ENCODE measurements at regions of chr9 and their contacts with region 1.

Region 1: DNA sequence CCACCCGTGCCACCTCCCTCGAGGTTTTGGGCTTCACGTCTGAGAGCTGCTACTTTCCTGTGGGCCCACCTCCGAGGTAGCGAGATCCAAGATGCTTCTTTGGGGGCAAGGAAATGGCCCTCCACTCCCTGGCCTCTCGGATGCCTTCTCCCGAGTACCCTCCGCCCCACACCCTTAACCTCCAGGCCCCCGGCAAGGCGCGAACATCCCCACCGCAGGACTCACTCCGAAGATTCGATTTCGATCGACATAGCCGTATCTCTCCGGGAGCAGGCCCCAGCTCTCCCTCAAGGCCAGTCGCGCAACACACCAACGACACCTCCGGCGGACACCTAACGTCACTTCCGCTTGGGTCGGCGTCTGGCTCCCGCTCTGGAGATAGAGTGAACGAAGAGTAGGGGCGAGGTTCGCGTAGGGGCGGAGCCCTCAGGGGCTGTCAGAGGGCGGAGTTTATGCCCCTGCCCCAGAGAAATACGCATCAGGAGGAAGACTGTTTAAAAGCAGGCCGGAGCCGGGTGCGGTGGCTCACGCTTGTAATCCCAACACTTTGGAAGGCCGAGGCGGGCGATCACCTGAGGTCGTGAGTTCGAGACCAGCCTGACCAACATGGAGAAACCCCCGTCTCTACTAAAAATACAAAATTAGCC is at the start of gene SMU1:
- DNase-seq: peak; percentile 89 to 98 (median 94)
- ATAC-seq: peak; percentile 94
- H3K4me3 ChIP-seq: peak within 1 kb of the TSS; percentile 69 to 70
- H3K4me3 Mint-ChIP-seq: peak within 1 kb of the TSS; percentile 97
- H3K27ac ChIP-seq: peak within 1 kb of the TSS; percentile 91
- H3K27ac Mint-ChIP-seq: peak within 1 kb of the TSS; percentile 99
- H3K4me1 ChIP-seq: peaks cover 28% of the 10 kb centered on the region
- H3K4me1 Mint-ChIP-seq: peaks cover 34% of the 10 kb centered on the region
- H3K27me3 ChIP-seq: no peaks in the 10 kb centered on the region
- H3K27me3 Mint-ChIP-seq: no peaks in the 10 kb centered on the region
- CTCF ChIP-seq: no peak
- total RNA-seq, gene SMU1: 29.2 to 30.0 TPM

Region 2: DNA sequence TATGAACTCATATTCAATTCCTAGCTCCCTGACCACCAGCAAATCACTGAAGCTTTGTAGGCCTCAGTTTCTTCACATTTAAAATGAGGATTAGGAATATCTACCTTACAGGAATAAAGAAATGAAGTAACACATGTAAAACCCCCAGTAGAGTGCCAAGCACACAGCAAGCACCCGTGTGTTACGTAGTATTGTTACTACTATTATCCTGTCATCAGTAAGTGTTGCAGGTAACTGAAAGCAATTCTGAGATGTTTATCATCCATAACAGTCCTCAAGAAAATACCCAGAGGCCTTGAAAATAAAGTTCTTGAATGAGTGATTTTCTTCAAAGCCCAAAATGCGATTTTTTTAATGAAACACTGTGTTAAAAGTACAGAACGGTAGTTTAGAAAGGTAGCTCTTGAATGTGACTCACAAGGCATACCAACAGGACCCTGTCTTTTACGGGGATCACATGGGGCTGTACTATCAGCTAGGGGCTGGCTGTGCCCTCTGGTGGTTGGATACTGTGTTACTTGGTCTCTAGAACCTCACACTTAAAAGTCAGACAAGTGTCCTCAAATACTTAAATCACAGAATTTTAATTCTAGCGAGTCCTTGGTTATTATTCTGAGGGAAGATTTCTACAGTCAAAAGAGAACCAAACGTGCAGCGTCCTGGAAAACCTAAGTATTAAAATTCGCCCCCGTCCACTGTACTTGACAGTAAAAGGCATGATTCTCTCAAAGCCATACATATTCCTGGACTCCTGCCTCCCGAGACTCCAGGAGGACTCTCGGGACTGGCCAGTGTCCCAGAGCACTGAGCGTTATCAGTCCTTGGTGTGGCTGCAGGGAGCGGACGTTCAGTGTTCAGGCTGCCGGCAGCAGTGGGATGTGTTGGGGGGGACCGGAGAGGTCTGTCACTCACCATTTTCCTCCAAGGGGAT is 504.2 kb before region 1 on chr9:
- CTCF ChIA-PET with region 1: no interaction called
- POLR2A ChIA-PET with region 1: no interaction called
- intact Hi-C with region 1: loop called in 1 of 2 experiments (anchors 5 kb)
- DNase-seq: peak; percentile 49 to 91 (median 76)
- ATAC-seq: peak; percentile 80
- H3K4me3 ChIP-seq: peak overlapping the region; percentile 83 to 89
- H3K4me3 Mint-ChIP-seq: peak overlapping the region; percentile 99
- H3K27ac ChIP-seq: peak overlapping the region; percentile 83 to 85
- H3K27ac Mint-ChIP-seq: peak overlapping the region; percentile 97
- H3K4me1 ChIP-seq: peaks cover 13% of the 10 kb centered on the region
- H3K4me1 Mint-ChIP-seq: peaks cover 33% of the 10 kb centered on the region
- H3K27me3 ChIP-seq: no peaks in the 10 kb centered on the region
- H3K27me3 Mint-ChIP-seq: no peaks in the 10 kb centered on the region
- CTCF ChIP-seq: peak; percentile 71

Region 3: GRCh38 chr9:33024966-33025571 is 51.4 kb before region 1 on chr9 and contains the start of gene DNAJA1:
- CTCF ChIA-PET with region 1: interaction called, 3 read pairs
- POLR2A ChIA-PET with region 1: no interaction called
- intact Hi-C with region 1: loop called (anchors 1 to 2 kb)
- DNase-seq: peak; percentile 92 to 98 (median 96)
- ATAC-seq: peak; percentile 80
- H3K4me3 ChIP-seq: peak within 1 kb of the TSS; percentile 100
- H3K4me3 Mint-ChIP-seq: peak within 1 kb of the TSS; percentile 96
- H3K27ac ChIP-seq: peak within 1 kb of the TSS; percentile 100
- H3K27ac Mint-ChIP-seq: peak within 1 kb of the TSS; percentile 96
- H3K4me1 ChIP-seq: peaks cover 63% of the 10 kb centered on the region
- H3K4me1 Mint-ChIP-seq: peaks cover 70% of the 10 kb centered on the region
- H3K27me3 ChIP-seq: no peaks in the 10 kb centered on the region
- H3K27me3 Mint-ChIP-seq: no peaks in the 10 kb centered on the region
- CTCF ChIP-seq: no peak
- total RNA-seq, gene DNAJA1: 170 to 172 TPM

Region 4: GRCh38 chr9:33092634-33093033 is 16.2 kb after region 1 on chr9:
- CTCF ChIA-PET with region 1: no interaction called
- POLR2A ChIA-PET with region 1: no interaction called
- intact Hi-C with region 1: no loop called
- DNase-seq: no peak
- ATAC-seq: no peak
- H3K4me3 ChIP-seq: no peak overlapping the region
- H3K4me3 Mint-ChIP-seq: no peak overlapping the region
- H3K27ac ChIP-seq: no peak overlapping the region
- H3K27ac Mint-ChIP-seq: no peak overlapping the region
- H3K4me1 ChIP-seq: no peaks in the 10 kb centered on the region
- H3K4me1 Mint-ChIP-seq: peaks cover 9% of the 10 kb centered on the region
- H3K27me3 ChIP-seq: no peaks in the 10 kb centered on the region
- H3K27me3 Mint-ChIP-seq: no peaks in the 10 kb centered on the region
- CTCF ChIP-seq: no peak

Region 5: DNA sequence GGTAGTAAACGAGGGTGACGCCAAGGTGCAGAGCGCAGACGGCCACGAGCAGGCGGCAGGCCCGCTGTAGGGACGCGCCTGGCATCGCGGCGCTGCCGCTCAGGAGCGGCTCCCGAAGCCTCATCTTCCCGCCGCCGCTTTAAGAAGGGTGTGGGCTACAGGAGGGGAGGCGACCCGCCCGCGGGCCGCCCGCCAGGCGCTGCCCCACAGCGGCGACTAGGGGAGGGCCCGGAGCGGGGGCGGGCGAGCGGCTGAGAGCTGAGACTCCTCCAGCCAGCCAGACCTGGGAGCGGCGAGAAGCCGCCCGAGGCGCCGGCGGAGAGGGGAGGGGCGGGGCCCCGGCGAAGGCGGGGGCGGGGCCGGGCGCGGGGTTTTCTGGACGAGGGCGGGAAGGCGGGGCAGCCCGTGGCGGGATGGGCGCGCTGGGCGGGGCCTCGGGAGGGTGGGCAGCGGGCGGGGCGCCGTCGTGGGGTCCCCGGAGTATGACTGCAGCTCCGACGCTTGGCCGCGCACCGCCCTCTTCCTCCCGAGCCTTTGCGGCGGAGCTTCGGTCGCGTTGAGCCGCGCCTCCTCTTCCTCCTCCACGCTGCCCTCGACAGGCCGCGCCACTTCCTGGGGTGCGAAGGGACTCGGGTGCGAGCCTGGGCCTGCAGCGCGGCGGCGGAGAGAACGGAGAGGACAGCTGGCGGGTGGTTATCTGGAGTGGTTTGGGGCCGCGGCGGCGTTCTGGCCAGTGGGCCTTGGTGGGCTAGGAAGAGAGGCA is 90.7 kb after region 1 on chr9 and contains the start of gene B4GALT1:
- CTCF ChIA-PET with region 1: interaction called, 18 read pairs
- POLR2A ChIA-PET with region 1: interaction called, 16 read pairs
- intact Hi-C with region 1: loop called (anchors 1 kb)
- DNase-seq: peak; percentile 94 to 99 (median 97)
- ATAC-seq: peak; percentile 82
- H3K4me3 ChIP-seq: peak within 1 kb of the TSS; percentile 86 to 96
- H3K4me3 Mint-ChIP-seq: peak within 1 kb of the TSS; percentile 93
- H3K27ac ChIP-seq: peak within 1 kb of the TSS; percentile 79 to 94
- H3K27ac Mint-ChIP-seq: peak within 1 kb of the TSS; percentile 99
- H3K4me1 ChIP-seq: peaks cover 54% of the 10 kb centered on the region
- H3K4me1 Mint-ChIP-seq: peaks cover 62% of the 10 kb centered on the region
- H3K27me3 ChIP-seq: no peaks in the 10 kb centered on the region
- H3K27me3 Mint-ChIP-seq: no peaks in the 10 kb centered on the region
- CTCF ChIP-seq: no peak
- total RNA-seq, gene B4GALT1: 139 to 140 TPM

Region 6: DNA sequence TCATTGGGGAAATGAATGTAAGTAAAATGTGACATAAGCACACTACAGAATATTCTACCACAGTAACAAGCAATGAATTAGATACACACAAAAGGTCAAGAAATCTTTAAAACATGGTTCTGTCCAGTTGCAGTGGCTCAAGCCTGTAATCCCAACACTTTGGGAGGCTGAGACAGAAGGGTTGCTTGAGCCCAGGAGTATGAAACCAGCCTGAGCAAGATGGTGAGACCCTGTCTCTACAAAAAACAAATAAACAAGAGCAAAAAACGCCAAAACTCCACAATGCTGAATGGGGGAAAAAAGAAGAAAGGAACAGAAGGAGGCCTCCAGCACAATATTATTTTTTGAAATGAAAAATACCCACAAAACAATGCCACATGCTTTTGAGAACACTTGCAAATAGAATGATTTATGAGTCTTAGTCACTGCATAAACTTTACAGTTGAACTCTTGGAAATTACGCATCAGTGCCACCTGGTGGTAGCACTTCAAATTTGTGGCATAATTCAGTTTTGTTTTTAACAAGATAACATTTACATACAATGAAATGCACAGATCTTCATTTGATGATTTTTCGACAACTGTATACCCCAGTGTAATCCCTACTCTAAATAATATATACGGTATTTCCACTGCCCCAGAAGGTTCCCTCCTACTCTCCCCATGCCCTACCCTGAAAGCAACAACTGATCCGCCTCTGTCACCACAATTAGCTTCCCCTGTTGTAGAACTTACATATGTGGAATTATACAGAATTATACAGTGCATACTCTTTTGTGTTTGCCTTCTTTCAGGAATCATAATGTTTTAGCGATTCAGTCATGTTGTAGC is 149.1 kb after region 1 on chr9:
- CTCF ChIA-PET with region 1: interaction called, 48 read pairs
- POLR2A ChIA-PET with region 1: interaction called, 10 read pairs
- intact Hi-C with region 1: loop called (anchors 1 kb)
- DNase-seq: peak; percentile 44 to 82 (median 74)
- ATAC-seq: peak; percentile 86
- H3K4me3 ChIP-seq: no peak overlapping the region
- H3K4me3 Mint-ChIP-seq: no peak overlapping the region
- H3K27ac ChIP-seq: no peak overlapping the region
- H3K27ac Mint-ChIP-seq: no peak overlapping the region
- H3K4me1 ChIP-seq: no peaks in the 10 kb centered on the region
- H3K4me1 Mint-ChIP-seq: peaks cover 13% of the 10 kb centered on the region
- H3K27me3 ChIP-seq: no peaks in the 10 kb centered on the region
- H3K27me3 Mint-ChIP-seq: peaks cover 2% of the 10 kb centered on the region
- CTCF ChIP-seq: peak; percentile 78

Region 7: DNA sequence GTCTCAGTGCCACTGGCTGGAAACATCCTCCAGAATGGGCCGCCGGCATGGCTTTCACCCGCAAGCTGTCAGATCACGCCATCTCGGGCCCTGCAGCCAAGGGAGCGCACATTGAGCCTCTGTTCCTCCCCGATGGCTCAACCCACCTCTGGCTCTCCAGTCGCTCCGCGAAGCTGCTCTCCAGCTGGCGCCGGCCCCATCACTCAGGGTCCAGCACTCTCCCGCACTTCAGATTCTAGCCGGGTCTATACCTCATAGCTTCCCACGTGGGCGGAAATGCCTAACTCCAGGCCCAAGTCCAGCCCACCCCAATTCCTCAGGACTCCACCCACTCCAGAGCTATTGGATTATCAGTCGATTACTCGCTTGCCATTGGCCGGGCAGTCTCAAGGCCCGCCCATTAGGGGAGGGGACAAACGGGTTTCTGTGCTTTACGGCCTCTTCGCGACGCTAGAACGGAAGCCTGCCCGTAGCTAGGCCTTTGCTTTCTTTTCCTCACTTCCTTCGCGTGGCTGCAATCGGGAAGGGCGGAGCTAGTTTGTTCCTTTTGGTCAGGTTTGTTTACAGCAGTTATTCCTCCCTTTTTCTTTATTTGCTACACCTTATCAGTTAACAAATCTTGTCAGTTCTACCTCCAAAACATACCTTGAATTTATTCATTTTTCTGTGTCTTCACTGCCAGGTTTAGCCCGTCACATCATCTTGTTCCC is 397.3 kb after region 1 on chr9 and contains the start of gene NOL6:
- CTCF ChIA-PET with region 1: no interaction called
- POLR2A ChIA-PET with region 1: no interaction called
- intact Hi-C with region 1: loop called (anchors 5 to 10 kb)
- DNase-seq: peak; percentile 97 to 99 (median 98)
- ATAC-seq: peak; percentile 99
- H3K4me3 ChIP-seq: peak within 1 kb of the TSS; percentile 91 to 94
- H3K4me3 Mint-ChIP-seq: peak within 1 kb of the TSS; percentile 99
- H3K27ac ChIP-seq: peak within 1 kb of the TSS; percentile 76 to 80
- H3K27ac Mint-ChIP-seq: peak within 1 kb of the TSS; percentile 96
- H3K4me1 ChIP-seq: peaks cover 22% of the 10 kb centered on the region
- H3K4me1 Mint-ChIP-seq: peaks cover 32% of the 10 kb centered on the region
- H3K27me3 ChIP-seq: no peaks in the 10 kb centered on the region
- H3K27me3 Mint-ChIP-seq: no peaks in the 10 kb centered on the region
- CTCF ChIP-seq: no peak
- total RNA-seq, gene NOL6: 41.8 to 42.3 TPM

Region 8: GRCh38 chr9:33843312-33843961 is 767.0 kb after region 1 on chr9:
- CTCF ChIA-PET with region 1: no interaction called
- POLR2A ChIA-PET with region 1: no interaction called
- intact Hi-C with region 1: no loop called
- DNase-seq: no peak
- ATAC-seq: no peak
- H3K4me3 ChIP-seq: no peak overlapping the region
- H3K4me3 Mint-ChIP-seq: peak overlapping the region; percentile 11
- H3K27ac ChIP-seq: no peak overlapping the region
- H3K27ac Mint-ChIP-seq: peak overlapping the region; percentile 64
- H3K4me1 ChIP-seq: peaks cover 12% of the 10 kb centered on the region
- H3K4me1 Mint-ChIP-seq: peaks cover 60% of the 10 kb centered on the region
- H3K27me3 ChIP-seq: no peaks in the 10 kb centered on the region
- H3K27me3 Mint-ChIP-seq: no peaks in the 10 kb centered on the region
- CTCF ChIP-seq: no peak